Transverse colon (tissue), 4 donors: ENCODE measurements at regions of chr9 and their contacts with region 1.

Region 1: GRCh38 chr9:93302551-93303257 is 118.8 kb downstream of the WNK2 start:
- DNase-seq: peak; percentile 73
- H3K4me3 ChIP-seq: no peak overlapping the region
- H3K27ac ChIP-seq: peak overlapping the region in 2 of 4 donors; percentile 0 to 1
- H3K4me1 ChIP-seq: peaks cover 7 to 41% (median 30%) of the 10 kb centered on the region in 4 donors
- H3K27me3 ChIP-seq: no peaks in the 10 kb centered on the region
- CTCF ChIP-seq: peak; percentile 54 to 70 (median 59)
- EP300 ChIP-seq: no peak
- POLR2A ChIP-seq: no peak

Region 2: GRCh38 chr9:93003552-93004407 is 298.9 kb before region 1 on chr9:
- in situ Hi-C with region 1: loop called in 1 of 4 experiments (anchors 25 kb)
- intact Hi-C with region 1: no loop called
- DNase-seq: peak; percentile 72
- H3K4me3 ChIP-seq: peak overlapping the region in 3 of 4 donors; percentile 21 to 40 (median 22)
- H3K27ac ChIP-seq: peak overlapping the region in 1 of 4 donors; percentile 8
- H3K4me1 ChIP-seq: peaks cover 0 to 11% (median 0%) of the 10 kb centered on the region in 4 donors
- H3K27me3 ChIP-seq: no peaks in the 10 kb centered on the region
- CTCF ChIP-seq: peak; percentile 69 to 78 (median 75)
- EP300 ChIP-seq: no peak
- POLR2A ChIP-seq: no peak

Region 3: GRCh38 chr9:93276968-93277367 is 25.7 kb before region 1 on chr9:
- in situ Hi-C with region 1: no loop called
- intact Hi-C with region 1: no loop called
- DNase-seq: peak; percentile 17
- H3K4me3 ChIP-seq: no peak overlapping the region
- H3K27ac ChIP-seq: no peak overlapping the region
- H3K4me1 ChIP-seq: peaks cover 0 to 4% (median 0%) of the 10 kb centered on the region in 4 donors
- H3K27me3 ChIP-seq: no peaks in the 10 kb centered on the region
- CTCF ChIP-seq: peak in 3 of 5 experiments; percentile 7 to 29 (median 7)
- EP300 ChIP-seq: no peak
- POLR2A ChIP-seq: no peak

Region 4: DNA sequence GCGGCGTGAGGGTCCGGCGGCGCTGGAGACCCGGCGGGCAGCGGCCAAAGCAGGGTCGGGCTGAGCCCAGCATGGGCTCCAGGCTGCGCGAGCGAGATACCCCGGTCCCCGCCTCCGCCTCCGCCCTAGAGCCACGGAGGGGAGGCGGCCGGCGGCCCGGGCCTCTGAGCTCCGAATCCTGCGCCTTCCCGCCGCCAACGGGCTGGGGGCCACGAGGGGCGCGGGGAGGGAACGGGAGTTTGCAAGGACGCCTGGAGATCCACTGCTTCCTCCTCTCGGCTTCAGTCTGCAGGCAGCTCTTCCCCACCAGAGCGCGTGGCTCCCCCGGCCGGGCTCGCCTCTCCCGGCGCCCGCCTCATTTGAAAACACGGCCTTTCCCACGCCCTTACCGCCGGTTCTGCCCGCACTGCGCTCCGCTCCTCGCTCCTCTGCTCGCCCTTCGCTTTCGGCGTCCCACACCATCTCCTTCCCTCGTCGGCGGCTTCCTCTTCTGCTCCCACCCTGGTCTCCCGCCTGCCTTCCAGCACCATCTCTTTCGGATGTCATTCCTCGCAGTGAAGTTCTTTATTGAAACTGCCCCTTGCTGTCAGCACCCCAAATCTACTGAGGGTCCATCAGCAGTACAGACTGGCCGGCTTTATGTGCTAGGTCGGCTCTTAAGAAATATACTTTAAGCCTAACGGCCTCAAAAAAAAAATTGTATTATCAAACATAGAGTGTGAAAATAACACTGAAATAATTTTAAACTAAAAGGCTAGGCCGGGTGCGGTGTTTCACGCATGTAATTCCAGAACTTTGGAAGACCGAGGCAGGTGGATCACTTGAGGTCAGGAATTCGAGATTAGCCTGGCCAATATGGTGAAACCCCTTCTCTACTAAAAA is 43.8 kb after region 1 on chr9:
- in situ Hi-C with region 1: no loop called
- intact Hi-C with region 1: no loop called
- DNase-seq: no peak
- H3K4me3 ChIP-seq: peak overlapping the region; percentile 18 to 54 (median 30)
- H3K27ac ChIP-seq: no peak overlapping the region
- H3K4me1 ChIP-seq: peaks cover 0 to 20% (median 3%) of the 10 kb centered on the region in 4 donors
- H3K27me3 ChIP-seq: peaks cover 18% of the 10 kb centered on the region
- CTCF ChIP-seq: no peak
- EP300 ChIP-seq: no peak
- POLR2A ChIP-seq: no peak

Region 5: DNA sequence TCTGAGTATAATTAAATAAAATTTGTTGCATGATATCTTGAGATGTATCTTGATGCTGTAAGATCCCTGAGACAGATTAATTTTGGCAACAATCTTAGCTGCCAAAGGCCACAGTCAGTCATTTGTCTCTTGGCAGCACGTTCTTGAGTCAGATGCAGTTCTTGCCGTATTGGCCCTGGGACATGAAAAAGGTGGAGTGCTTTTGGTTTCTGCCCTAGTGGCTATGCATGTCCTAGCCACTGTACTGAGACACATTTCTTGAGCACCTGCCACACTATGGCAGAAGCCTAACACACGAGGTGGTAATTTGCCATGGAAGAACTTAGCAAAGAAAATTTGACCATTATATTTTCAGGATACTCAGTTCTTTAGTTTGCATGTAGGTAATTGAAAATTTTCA is 228.7 kb after region 1 on chr9:
- in situ Hi-C with region 1: loop called in 1 of 4 experiments (anchors 25 kb)
- intact Hi-C with region 1: no loop called
- DNase-seq: no peak
- H3K4me3 ChIP-seq: no peak overlapping the region
- H3K27ac ChIP-seq: no peak overlapping the region
- H3K4me1 ChIP-seq: peaks cover 0 to 13% (median 0%) of the 10 kb centered on the region in 4 donors
- H3K27me3 ChIP-seq: no peaks in the 10 kb centered on the region
- CTCF ChIP-seq: peak in 4 of 5 experiments; percentile 20 to 41 (median 29)
- EP300 ChIP-seq: no peak
- POLR2A ChIP-seq: no peak